ENCODE measurements at regions of chr6 and their contacts with region 1.

Region 1: DNA sequence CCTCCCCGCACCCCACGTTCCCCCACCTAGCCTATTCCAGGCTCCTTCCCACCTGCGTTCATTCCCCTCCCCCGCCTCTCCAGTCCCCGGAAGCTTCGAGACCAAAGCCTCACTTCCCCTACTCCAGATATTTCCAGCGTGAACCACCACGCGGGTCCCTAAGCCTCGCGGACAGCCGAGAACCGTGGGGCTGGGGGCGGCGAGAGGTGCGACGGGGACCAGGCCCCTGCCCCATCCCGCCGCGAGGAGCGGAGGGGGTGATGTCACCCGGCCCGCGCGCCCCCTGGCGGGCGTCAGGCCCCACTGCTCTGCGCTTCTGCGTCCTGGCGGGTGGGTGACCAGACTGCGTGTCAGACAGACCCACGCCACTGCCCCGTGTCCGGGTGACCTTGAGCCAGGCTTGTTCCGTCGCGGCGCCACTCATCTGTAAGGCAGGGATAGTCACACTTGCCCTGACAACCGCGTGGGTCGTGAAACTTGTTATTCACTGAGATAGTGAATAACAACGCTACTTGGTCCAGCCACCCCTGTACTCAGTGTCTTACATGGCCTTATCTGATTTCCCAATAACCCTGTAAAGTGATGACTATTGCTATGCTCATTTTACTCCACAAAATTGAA is 9.0 kb upstream of the HSP90AB1 start:
- DNase-seq: peak; percentile 36 to 78
- H3K4me3 ChIP-seq: peak overlapping the region; percentile 63
- H3K27ac ChIP-seq: no peak overlapping the region
- H3K4me1 ChIP-seq: peaks cover 17% of the 10 kb centered on the region
- H3K27me3 ChIP-seq: no peaks in the 10 kb centered on the region
- CTCF ChIP-seq: peak; percentile 98

Region 2: DNA sequence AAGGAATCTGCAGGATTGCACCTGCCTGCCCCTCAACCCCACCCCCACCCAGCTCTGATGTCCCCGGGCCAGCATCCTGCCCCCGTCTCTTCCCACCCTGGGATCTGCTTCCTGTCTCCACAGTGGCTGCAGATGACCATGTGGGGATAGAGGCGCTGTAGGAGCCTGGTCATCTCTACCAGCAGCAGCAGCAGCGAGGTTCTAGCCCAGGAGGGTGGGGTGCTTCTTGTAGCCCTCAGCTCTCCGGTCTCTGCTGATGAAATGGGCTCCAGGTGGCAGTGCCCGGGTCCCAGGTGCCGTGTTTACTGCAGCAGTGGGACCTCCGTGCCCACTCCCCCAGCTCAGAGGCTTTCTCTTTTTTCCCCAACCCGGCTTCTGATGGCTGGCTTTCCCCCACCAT is 54.1 kb before region 1 on chr6:
- CTCF ChIA-PET with region 1: no interaction called
- POLR2A ChIA-PET with region 1: interaction called, 17 read pairs
- intact Hi-C with region 1: no loop called
- DNase-seq: no peak
- H3K4me3 ChIP-seq: no peak overlapping the region
- H3K27ac ChIP-seq: no peak overlapping the region
- H3K4me1 ChIP-seq: no peaks in the 10 kb centered on the region
- H3K27me3 ChIP-seq: no peaks in the 10 kb centered on the region
- CTCF ChIP-seq: no peak

Region 3: DNA sequence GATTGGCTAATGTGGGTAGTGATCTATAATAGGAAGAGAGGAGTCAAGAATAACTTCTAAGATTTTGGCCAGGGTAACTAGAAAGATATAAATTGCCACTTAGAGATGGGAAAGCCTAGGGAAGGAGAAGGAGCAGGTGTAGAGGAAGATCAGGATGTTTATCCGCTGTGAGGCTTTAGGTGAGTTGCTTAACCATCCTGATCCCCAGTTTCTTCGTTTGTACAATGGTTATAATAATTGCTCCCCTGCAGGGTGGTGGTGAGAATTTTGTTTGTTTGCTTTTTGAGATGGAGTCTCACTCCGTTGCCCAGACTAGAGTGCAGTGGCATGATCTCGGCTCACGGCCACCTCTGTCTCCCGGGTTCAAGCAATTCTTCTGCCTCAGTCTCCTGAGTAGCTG is 23.6 kb before region 1 on chr6:
- CTCF ChIA-PET with region 1: no interaction called
- POLR2A ChIA-PET with region 1: no interaction called
- intact Hi-C with region 1: no loop called
- DNase-seq: no peak
- H3K4me3 ChIP-seq: no peak overlapping the region
- H3K27ac ChIP-seq: no peak overlapping the region
- H3K4me1 ChIP-seq: peaks cover 14% of the 10 kb centered on the region
- H3K27me3 ChIP-seq: no peaks in the 10 kb centered on the region
- CTCF ChIP-seq: no peak

Region 4: GRCh38 chr6:44338228-44339122 is 100.6 kb after region 1 on chr6:
- CTCF ChIA-PET with region 1: no interaction called
- POLR2A ChIA-PET with region 1: interaction called, 10 read pairs
- intact Hi-C with region 1: no loop called
- DNase-seq: peak in 1 of 2 experiments; percentile 56
- H3K4me3 ChIP-seq: no peak overlapping the region
- H3K27ac ChIP-seq: no peak overlapping the region
- H3K4me1 ChIP-seq: peaks cover 7% of the 10 kb centered on the region; the same call in 1 of the 2 replicates
- H3K27me3 ChIP-seq: peaks cover 15% of the 10 kb centered on the region; the same call in 1 of the 2 replicates
- CTCF ChIP-seq: peak; percentile 84